HAP-1 (cell line): ENCODE measurements at regions of chr3 and their contacts with region 1.

Region 1: DNA sequence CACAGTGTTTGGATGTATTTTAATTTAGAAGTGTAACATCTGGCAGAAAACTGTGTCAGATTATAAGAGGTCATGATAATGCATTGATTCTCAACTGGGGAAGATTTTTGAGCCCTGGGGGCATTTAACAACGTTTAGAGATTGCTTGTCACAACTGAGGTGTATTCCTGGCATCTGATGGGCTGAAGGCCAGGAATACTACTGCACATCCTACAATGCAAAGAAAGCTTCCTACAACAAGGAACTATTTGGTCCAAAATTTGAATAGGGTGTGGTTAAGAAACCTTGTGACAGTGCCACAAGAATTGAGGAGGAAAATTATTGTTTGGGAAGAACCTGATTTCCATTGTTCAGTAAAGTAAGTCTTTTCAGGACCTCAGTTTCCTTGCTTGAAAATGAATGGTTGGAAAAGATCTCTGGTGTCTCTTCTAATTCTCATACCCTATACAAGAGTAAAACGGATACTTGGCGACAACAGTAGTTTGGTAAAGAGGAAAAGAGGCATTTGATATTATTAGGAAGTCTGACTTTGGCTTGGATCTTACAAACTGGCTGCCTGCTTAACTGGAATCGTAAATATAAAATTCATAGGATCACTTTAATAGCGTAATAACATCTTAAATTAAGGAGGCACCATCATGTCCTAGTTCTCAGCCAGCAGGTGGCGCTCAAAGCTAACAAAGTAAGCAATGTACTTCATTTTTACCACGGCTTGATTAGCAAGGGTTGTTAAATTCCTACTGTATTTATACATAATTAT is 4.3 kb downstream of the DAZL start:
- DNase-seq: peak; percentile 81 to 90
- H3K4me3 ChIP-seq: no peak overlapping the region
- H3K4me1 ChIP-seq: peaks cover 34% of the 10 kb centered on the region
- H3K27me3 ChIP-seq: no peaks in the 10 kb centered on the region

Region 2: DNA sequence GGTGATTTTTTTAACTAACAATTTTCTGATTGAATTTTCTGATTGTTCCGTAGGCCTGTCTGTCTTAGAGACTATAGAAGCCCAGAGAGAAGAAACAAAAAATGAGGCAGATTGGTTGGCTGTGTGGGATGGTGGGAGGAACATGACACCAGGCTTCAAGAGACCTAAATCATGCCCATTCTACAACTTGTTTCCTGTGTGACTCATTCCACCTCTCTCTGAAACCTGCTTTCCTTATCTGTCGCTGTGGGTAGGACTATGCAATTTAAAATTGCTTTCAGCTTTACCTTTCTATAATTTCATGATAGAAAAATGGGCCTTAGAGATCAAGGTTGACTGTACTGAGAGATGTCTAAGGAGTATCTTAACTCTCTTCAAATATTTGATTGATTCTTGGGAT is 291.4 kb before region 1 on chr3:
- in situ Hi-C with region 1: no loop called
- DNase-seq: no peak
- H3K4me3 ChIP-seq: no peak overlapping the region
- H3K4me1 ChIP-seq: no peaks in the 10 kb centered on the region
- H3K27me3 ChIP-seq: no peaks in the 10 kb centered on the region

Region 3: DNA sequence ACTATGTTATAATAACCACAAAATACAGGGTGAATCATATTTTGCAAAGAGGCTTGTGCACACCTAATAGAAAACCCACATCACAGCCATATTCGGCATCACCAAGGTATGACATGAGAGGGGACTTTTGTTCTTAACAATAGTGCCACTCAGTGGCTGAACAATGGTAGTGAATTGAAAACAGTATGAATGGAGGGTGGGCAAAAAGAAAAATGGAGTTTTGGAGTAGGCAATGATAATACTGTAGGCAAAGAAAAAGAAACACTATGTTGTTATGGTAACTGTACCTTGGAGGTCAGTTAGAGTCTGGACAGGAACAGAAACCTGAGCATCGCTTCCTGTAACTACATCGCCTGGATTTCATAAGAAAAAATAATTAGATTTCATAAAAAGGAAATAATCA is 632.4 kb after region 1 on chr3:
- in situ Hi-C with region 1: loop called (anchors 10 kb)
- DNase-seq: peak; percentile 33 to 82
- H3K4me3 ChIP-seq: no peak overlapping the region
- H3K4me1 ChIP-seq: peaks cover 4% of the 10 kb centered on the region
- H3K27me3 ChIP-seq: no peaks in the 10 kb centered on the region